ENCODE measurements at regions of chr10 and their contacts with region 1.

Region 1: DNA sequence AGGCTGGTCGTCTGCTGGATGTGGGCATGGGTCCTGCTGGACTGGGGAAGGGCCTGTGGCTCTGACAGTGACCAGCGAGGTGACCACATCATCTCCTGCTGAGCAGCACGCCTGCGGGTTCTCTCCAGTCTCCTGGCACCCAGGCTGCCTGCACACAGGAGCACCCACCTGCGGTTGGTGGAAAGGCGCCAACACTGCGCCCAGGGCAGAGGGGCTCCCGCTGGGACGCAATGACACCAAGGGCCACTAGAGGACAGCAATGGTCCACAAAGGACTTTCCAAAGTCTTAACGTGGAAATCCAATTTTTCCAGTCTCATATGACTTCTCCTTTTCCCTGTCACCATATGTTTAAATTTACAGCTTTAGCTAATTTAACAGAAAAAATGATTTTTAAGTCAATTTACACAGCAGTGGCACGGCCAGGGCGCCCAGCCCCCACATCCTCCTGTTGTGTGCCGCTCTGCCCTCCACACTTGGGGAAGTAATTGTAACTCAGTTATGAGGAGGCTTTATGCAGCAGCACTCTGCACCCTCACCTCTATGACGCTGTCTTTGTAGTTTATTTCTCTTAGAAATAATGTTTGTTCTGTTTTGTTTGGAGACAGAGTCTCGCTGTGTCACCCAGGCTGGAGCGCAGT is 38.1 kb downstream of the CFAP46 start:
- DNase-seq: peak in 1 of 2 experiments; percentile 83
- H3K4me3 ChIP-seq: no peak overlapping the region
- H3K27ac ChIP-seq: no peak overlapping the region
- H3K4me1 ChIP-seq: no peaks in the 10 kb centered on the region; a peak in 1 of 7 replicates
- H3K27me3 ChIP-seq: no peaks in the 10 kb centered on the region
- CTCF ChIP-seq: peak; percentile 86 to 95 (median 87)
- EP300 ChIP-seq: no peak
- POLR2A ChIP-seq: no peak
- RAD21 ChIP-seq: peak; percentile 90 to 91

Region 2: GRCh38 chr10:132654702-132655661 is 249.3 kb before region 1 on chr10:
- CTCF ChIA-PET with region 1: interaction called, 12 read pairs
- POLR2A ChIA-PET with region 1: no interaction called
- DNase-seq: peak; percentile 39 to 92
- H3K4me3 ChIP-seq: no peak overlapping the region
- H3K27ac ChIP-seq: no peak overlapping the region
- H3K4me1 ChIP-seq: no peaks in the 10 kb centered on the region; a peak in 1 of 7 replicates
- H3K27me3 ChIP-seq: no peaks in the 10 kb centered on the region
- CTCF ChIP-seq: peak in 2 of 3 experiments; percentile 90 to 93; a peak in 3 of 4 replicates
- EP300 ChIP-seq: no peak
- POLR2A ChIP-seq: no peak
- RAD21 ChIP-seq: peak; percentile 95 to 97

Region 3: DNA sequence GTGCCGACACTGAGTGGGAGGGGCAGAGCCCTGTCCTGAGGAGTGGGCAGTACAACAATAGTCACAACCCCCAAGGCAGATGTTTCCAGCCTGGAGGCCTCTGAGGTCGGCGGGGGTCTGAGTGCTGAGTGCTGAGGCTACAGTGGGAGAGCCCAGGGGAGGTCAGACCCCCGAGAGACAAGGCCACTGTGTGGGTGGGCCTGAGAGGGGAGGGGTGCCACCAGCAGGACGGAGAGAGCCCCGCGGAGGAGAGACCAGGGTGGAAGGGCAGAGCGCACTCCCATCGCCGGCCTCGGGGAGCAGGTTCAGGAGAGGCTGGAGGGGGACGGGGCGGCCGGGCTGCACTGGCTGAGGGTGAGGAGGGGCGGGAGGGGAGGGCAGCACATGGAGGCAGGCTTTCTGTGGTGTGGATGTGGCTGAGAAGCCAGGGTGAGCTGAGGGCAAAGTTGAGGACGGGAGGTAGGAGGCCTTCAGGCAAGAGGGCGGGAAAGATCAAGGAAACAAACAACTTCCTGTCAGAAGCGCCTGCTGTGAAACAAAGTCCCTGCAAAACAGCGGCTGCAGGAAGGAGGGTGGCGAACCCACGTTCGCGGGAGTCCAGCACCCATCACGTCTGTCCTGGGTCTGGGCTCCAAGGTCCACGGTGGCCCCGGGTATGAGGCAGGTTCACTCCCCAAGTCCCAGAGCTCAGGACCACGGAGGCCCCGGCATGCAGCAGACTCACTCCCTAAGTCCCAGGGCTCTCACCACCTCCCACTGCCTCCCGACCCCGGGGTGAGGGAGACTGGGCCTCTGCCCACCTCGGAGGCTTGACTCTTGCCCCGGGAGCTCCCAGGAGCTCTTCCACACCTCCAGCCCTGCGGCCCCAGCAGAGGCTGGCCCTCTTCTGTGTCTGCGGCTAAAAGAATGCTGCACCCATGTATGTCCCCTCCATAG is 41.5 kb before region 1 on chr10:
- CTCF ChIA-PET with region 1: interaction called, 13 read pairs
- POLR2A ChIA-PET with region 1: no interaction called
- DNase-seq: peak in 1 of 2 experiments; percentile 50
- H3K4me3 ChIP-seq: no peak overlapping the region
- H3K27ac ChIP-seq: no peak overlapping the region
- H3K4me1 ChIP-seq: peaks cover 0 to 6% (median 3%) of the 10 kb centered on the region in 4 experiments; a peak in 5 of 7 replicates
- H3K27me3 ChIP-seq: no peaks in the 10 kb centered on the region
- CTCF ChIP-seq: no peak
- EP300 ChIP-seq: no peak
- POLR2A ChIP-seq: no peak
- RAD21 ChIP-seq: no peak

Region 4: DNA sequence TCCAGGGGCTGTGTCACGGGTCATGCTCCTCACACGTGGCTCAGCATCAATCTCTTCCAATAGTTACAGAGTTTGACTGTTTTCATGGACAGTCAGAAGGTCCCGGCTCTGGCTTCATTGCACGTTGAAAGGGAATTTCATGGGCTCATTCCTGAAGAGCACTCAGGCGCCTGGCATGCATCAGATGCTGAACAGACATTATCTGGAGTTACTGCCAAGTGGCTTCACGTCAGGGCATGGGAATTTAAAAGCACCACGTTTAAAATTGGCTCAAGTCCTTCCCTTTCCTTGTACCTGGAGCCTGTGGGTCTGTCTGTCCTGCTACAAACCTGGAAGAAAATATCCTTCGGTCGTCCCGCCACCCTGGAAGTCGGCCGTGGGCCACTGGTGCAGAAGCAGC is 12.3 kb before region 1 on chr10:
- CTCF ChIA-PET with region 1: interaction called, 37 read pairs
- POLR2A ChIA-PET with region 1: no interaction called
- DNase-seq: peak in 1 of 2 experiments; percentile 42
- H3K4me3 ChIP-seq: peak overlapping the region in 1 of 4 experiments; percentile 4; a peak in 1 of 8 replicates
- H3K27ac ChIP-seq: no peak overlapping the region
- H3K4me1 ChIP-seq: peaks cover 13 to 31% (median 20%) of the 10 kb centered on the region in 4 experiments
- H3K27me3 ChIP-seq: no peaks in the 10 kb centered on the region
- CTCF ChIP-seq: no peak
- EP300 ChIP-seq: no peak
- POLR2A ChIP-seq: no peak
- RAD21 ChIP-seq: no peak

Region 5: DNA sequence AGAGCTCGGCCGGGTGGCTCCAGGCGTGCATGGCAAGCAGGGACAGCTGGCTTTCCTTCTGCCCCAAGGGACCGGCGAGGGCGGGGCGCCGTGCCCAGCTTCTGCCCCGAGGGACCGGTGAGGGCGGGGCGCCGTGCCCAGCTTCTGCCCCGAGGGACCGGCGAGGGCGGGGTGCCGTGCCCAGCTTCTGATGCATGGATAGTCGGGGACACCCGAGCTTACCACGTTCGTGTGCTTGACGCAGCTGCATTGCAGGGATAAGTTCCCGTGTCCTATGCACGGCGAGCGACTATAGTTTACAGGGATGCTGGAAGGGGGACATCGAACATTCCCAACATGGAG is 11.1 kb after region 1 on chr10:
- CTCF ChIA-PET with region 1: interaction called, 23 read pairs
- POLR2A ChIA-PET with region 1: interaction called, 3 read pairs
- DNase-seq: no peak
- H3K4me3 ChIP-seq: no peak overlapping the region
- H3K27ac ChIP-seq: no peak overlapping the region
- H3K4me1 ChIP-seq: peaks cover 0 to 16% (median 2%) of the 10 kb centered on the region in 4 experiments; a peak in 6 of 7 replicates
- H3K27me3 ChIP-seq: no peaks in the 10 kb centered on the region
- CTCF ChIP-seq: no peak
- EP300 ChIP-seq: no peak
- POLR2A ChIP-seq: no peak
- RAD21 ChIP-seq: no peak

Region 6: GRCh38 chr10:132939957-132940790 is 35.9 kb after region 1 on chr10:
- CTCF ChIA-PET with region 1: interaction called, 32 read pairs
- POLR2A ChIA-PET with region 1: no interaction called
- DNase-seq: peak in 1 of 2 experiments; percentile 84
- H3K4me3 ChIP-seq: no peak overlapping the region
- H3K27ac ChIP-seq: no peak overlapping the region
- H3K4me1 ChIP-seq: peaks cover 0 to 7% (median 1%) of the 10 kb centered on the region in 4 experiments; a peak in 3 of 7 replicates
- H3K27me3 ChIP-seq: peaks cover 0 to 5% (median 0%) of the 10 kb centered on the region in 4 experiments; a peak in 2 of 7 replicates
- CTCF ChIP-seq: peak; percentile 80 to 95 (median 91)
- EP300 ChIP-seq: no peak
- POLR2A ChIP-seq: no peak
- RAD21 ChIP-seq: peak; percentile 89 to 94

Region 7: GRCh38 chr10:132965411-132966057 is 61.2 kb after region 1 on chr10:
- CTCF ChIA-PET with region 1: no interaction called
- POLR2A ChIA-PET with region 1: no interaction called
- DNase-seq: no peak
- H3K4me3 ChIP-seq: no peak overlapping the region
- H3K27ac ChIP-seq: no peak overlapping the region
- H3K4me1 ChIP-seq: peaks cover 3 to 9% (median 6%) of the 10 kb centered on the region in 4 experiments; a peak in 6 of 7 replicates
- H3K27me3 ChIP-seq: no peaks in the 10 kb centered on the region; a peak in 1 of 7 replicates
- CTCF ChIP-seq: no peak
- EP300 ChIP-seq: no peak
- POLR2A ChIP-seq: no peak
- RAD21 ChIP-seq: no peak

Region 8: GRCh38 chr10:132975526-132976328 is 71.4 kb after region 1 on chr10:
- CTCF ChIA-PET with region 1: no interaction called
- POLR2A ChIA-PET with region 1: no interaction called
- DNase-seq: no peak
- H3K4me3 ChIP-seq: no peak overlapping the region
- H3K27ac ChIP-seq: no peak overlapping the region
- H3K4me1 ChIP-seq: peaks cover 0 to 20% (median 12%) of the 10 kb centered on the region in 4 experiments; a peak in 6 of 7 replicates
- H3K27me3 ChIP-seq: peaks cover 0 to 5% (median 0%) of the 10 kb centered on the region in 4 experiments; a peak in 2 of 7 replicates
- CTCF ChIP-seq: no peak
- EP300 ChIP-seq: no peak
- POLR2A ChIP-seq: no peak
- RAD21 ChIP-seq: no peak

Region 9: GRCh38 chr10:133124357-133125211 is 220.3 kb after region 1 on chr10:
- CTCF ChIA-PET with region 1: interaction called, 13 read pairs
- POLR2A ChIA-PET with region 1: no interaction called
- DNase-seq: peak in 1 of 2 experiments; percentile 88
- H3K4me3 ChIP-seq: peak overlapping the region in 1 of 4 experiments; percentile 32; a peak in 2 of 8 replicates
- H3K27ac ChIP-seq: no peak overlapping the region
- H3K4me1 ChIP-seq: peaks cover 0 to 3% (median 0%) of the 10 kb centered on the region in 4 experiments; a peak in 1 of 7 replicates
- H3K27me3 ChIP-seq: no peaks in the 10 kb centered on the region; a peak in 1 of 7 replicates
- CTCF ChIP-seq: peak in 2 of 3 experiments; percentile 52 to 81; a peak in 3 of 4 replicates
- EP300 ChIP-seq: no peak
- POLR2A ChIP-seq: no peak
- RAD21 ChIP-seq: peak; percentile 76 to 82

Region 10: GRCh38 chr10:133158756-133159610 is 254.7 kb after region 1 on chr10:
- CTCF ChIA-PET with region 1: no interaction called
- POLR2A ChIA-PET with region 1: no interaction called
- DNase-seq: no peak
- H3K4me3 ChIP-seq: peak overlapping the region in 1 of 4 experiments; percentile 44; a peak in 2 of 8 replicates
- H3K27ac ChIP-seq: no peak overlapping the region
- H3K4me1 ChIP-seq: peaks cover 3 to 41% (median 19%) of the 10 kb centered on the region in 4 experiments
- H3K27me3 ChIP-seq: peaks cover 0 to 5% (median 0%) of the 10 kb centered on the region in 4 experiments; a peak in 2 of 7 replicates
- CTCF ChIP-seq: peak in 1 of 3 experiments; percentile 25; a peak in 1 of 4 replicates
- EP300 ChIP-seq: no peak
- POLR2A ChIP-seq: no peak
- RAD21 ChIP-seq: peak; percentile 20; a peak in 2 of 4 replicates